ENCODE measurements at regions of chr17 and their contacts with region 1.

Region 1: DNA sequence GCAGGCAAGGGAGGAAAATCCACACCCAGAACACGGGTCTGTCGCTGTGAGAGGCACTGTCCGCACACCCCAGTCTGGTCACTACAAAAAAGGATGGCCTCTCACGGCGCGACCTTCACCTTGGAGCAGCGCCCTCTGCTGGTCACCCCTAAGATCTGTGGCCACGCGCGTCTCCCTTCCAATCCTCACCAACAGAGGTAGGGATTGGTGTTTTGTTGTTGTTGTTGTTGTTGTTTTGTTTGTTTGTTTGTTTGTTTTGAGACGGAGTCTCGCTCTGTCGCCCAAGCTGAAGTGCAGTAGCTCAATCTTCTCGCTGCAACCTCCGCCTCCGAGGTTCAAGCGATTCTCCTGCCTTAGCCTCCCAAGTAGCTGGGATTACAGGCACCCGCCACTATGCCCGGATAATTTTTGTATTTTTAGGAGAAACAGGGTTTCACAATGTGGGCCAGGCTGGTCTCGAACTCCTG is 15.0 kb upstream of the C17orf58 start:
- DNase-seq: peak; percentile 49
- H3K4me3 Mint-ChIP-seq: peak overlapping the region; percentile 76
- H3K27ac Mint-ChIP-seq: peak overlapping the region; percentile 63
- H3K4me1 Mint-ChIP-seq: peaks cover 4% of the 10 kb centered on the region
- H3K27me3 Mint-ChIP-seq: peaks cover 9% of the 10 kb centered on the region

Region 2: GRCh38 chr17:67931233-67931632 is 80.0 kb before region 1 on chr17:
- intact Hi-C with region 1: no loop called
- DNase-seq: no peak
- H3K4me3 Mint-ChIP-seq: no peak overlapping the region
- H3K27ac Mint-ChIP-seq: no peak overlapping the region
- H3K4me1 Mint-ChIP-seq: no peaks in the 10 kb centered on the region
- H3K27me3 Mint-ChIP-seq: no peaks in the 10 kb centered on the region

Region 3: DNA sequence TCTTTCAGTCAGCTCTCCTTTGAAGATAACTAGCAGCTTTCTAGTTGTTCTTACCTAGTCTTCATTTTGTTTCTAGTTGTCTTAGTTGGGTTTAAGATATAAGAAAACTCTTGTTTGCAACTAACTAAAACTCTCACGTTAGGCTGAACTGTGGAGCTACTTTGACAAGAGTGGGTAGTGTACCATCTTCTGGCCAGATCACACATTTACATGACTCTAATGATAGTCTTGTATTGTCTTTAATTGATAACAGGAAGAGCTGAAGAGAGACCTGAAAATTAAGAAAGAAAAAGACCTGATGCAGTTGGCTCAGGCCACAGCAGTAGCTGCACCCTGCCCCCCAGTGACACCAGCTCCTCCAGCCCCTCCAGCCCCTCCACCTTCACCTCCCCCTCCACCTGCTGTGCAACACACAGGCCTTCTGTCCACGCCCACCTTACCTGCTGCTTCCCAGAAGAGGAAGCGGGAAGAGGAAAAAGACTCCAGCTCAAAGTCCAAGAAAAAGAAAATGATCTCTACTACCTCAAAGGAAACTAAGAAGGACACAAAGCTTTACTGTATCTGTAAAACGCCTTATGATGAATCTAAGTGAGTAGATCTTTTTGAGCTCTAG is 51.8 kb before region 1 on chr17:
- intact Hi-C with region 1: loop called (anchors 5 kb)
- DNase-seq: no peak
- H3K4me3 Mint-ChIP-seq: no peak overlapping the region
- H3K27ac Mint-ChIP-seq: peak overlapping the region; percentile 35
- H3K4me1 Mint-ChIP-seq: peaks cover 11% of the 10 kb centered on the region
- H3K27me3 Mint-ChIP-seq: no peaks in the 10 kb centered on the region

Region 4: DNA sequence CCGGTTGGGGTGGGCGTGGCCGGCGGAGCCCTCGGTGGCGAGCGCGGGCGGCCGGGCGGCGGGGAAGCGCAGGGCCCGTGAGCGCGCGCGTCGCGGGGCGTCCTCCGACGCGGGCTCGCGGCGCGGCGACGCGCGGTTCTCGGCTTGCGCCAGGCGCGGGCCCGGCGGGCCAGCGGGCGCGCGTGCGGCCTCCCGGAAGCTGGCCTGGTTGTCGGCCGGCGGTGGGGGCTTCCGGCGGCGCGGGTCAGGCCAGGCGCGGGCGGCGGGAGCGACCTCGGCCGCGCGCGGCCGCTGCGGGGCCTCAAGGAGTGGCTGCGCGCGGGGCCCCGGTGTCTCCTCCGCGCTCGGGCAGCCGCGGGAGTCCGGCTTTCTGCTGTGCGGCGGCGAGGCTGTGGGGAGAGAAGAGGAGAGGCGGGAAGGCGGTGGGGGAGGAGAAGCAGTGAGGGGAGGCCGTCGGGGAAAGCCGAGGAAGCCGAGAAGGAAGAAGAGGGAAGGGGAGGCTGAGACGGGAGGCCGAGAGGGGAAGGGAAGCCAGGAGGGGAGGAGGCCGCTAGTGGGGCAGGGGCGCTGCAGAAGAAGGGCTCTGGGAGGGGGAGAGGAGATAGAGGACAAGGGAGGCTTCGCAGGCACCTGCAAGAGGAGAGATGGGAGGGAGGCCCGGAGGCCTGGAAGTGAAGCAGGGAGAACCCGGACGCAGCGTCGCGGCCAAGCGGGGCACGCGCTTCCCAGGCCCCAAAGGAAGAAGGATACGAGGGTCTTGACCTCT is 17.5 kb before region 1 on chr17:
- intact Hi-C with region 1: loop called (anchors 2 kb)
- DNase-seq: peak; percentile 69
- H3K4me3 Mint-ChIP-seq: peak overlapping the region; percentile 91
- H3K27ac Mint-ChIP-seq: peak overlapping the region; percentile 82
- H3K4me1 Mint-ChIP-seq: peaks cover 33% of the 10 kb centered on the region
- H3K27me3 Mint-ChIP-seq: peaks cover 23% of the 10 kb centered on the region